ENCODE measurements at regions of chr14 and their contacts with region 1.

Region 1: GRCh38 chr14:57686304-57686703 is 179.6 kb downstream of the SLC35F4 start:
- DNase-seq: peak in 1 of 10 donors; percentile 47
- H3K4me3 ChIP-seq: no peak overlapping the region
- H3K27ac ChIP-seq: no peak overlapping the region
- H3K27me3 ChIP-seq: no peaks in the 10 kb centered on the region
- CTCF ChIP-seq: no peak

Region 2: GRCh38 chr14:57502586-57503254 is 183.6 kb before region 1 on chr14:
- intact Hi-C with region 1: no loop called
- DNase-seq: peak in 5 of 10 donors; percentile 17 to 51 (median 38)
- H3K4me3 ChIP-seq: no peak overlapping the region
- H3K27ac ChIP-seq: peak overlapping the region in 1 of 59 donors; percentile 17
- H3K27me3 ChIP-seq: no peaks in the 10 kb centered on the region
- CTCF ChIP-seq: no peak

Region 3: DNA sequence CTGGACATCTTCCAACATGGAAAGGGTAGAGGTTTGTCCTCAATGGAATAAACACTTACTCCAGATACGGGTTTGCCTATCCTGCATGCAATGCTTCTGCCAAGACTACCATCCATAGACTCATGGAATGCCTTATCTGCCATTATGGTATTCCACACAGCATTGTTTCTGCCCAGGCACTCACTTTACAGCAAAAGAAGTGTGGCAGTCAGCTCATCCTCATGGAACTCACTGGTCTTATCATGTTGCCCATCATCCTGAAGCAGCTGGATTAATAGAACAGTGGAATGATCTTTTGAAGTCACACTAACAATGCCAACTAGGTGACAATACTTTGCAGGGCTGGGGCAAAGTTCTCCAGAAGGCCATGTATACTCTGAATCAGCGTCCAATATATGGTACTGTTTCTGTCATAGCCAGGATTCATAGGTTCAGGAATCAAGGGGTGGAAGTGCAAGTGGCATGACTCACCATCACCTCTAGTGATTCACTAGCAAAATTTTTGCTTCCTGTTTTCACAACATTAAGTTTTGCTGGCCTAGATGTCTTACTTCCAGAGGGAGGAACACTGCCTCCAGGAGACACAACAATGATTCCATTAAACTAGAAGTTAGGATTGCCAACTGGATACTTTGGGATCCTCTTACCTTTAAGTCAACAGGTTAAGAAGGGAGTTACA is 39.2 kb after region 1 on chr14:
- intact Hi-C with region 1: loop called in 1 of 2 experiments (anchors 2 kb)
- DNase-seq: no peak
- H3K4me3 ChIP-seq: no peak overlapping the region
- H3K27ac ChIP-seq: no peak overlapping the region
- H3K27me3 ChIP-seq: peaks cover 0 to 3% (median 0%) of the 10 kb centered on the region in 45 donors
- CTCF ChIP-seq: no peak